RWPE1 (cell line): ENCODE measurements at regions of chr21 and their contacts with region 1.

Region 1: DNA sequence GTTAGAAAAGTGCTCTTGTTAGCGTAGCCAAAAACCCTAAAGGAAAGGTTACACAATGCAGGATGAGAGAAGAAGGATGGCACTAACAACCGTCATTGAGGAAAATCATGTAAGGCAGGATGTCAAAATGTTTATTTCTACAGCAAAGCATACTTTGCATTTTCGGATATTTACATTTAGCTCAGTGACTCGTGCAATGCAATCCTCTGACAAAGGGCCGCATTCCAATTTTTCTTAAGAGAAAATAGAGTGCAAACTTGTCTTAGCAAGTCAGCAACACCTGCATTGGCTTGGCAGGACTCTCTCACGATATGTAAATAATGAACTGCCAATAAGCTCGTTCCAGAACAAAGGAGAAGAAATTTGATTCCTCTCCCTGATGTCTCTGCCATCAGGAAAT is 33.3 kb downstream of the TIAM1 start:
- DNase-seq: peak; percentile 63
- H3K27ac ChIP-seq: no peak overlapping the region; the same call in 1 of the 2 replicates
- CTCF ChIP-seq: no peak

Region 2: GRCh38 chr21:31335957-31336738 is 25.4 kb after region 1 on chr21:
- CTCF ChIA-PET with region 1: interaction called, 11 read pairs
- POLR2A ChIA-PET with region 1: no interaction called
- DNase-seq: peak; percentile 85
- H3K27ac ChIP-seq: peak overlapping the region; percentile 71
- CTCF ChIP-seq: no peak

Region 3: DNA sequence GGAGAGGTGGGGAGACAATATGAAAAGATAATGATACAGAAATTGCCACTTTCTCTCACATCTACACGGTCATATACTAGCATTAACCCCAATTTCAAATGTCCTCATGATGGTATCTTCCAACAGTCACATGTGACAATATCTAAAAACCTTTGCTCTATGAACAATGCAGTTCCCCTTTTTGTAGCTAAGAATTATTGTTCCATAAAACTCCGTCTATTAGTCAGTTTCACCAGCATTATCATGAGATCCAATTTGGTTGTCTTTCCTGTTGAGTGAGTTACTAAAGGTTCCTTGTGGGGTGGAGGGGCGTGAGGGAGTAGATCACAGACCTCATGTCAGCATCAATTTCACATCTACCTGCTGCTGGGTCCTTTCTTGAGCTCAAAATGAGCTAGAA is 31.6 kb after region 1 on chr21:
- CTCF ChIA-PET with region 1: interaction called, 12 read pairs
- POLR2A ChIA-PET with region 1: no interaction called
- DNase-seq: no peak
- H3K27ac ChIP-seq: no peak overlapping the region
- CTCF ChIP-seq: no peak